K562 (cell line): ENCODE measurements at regions of chr3 and their contacts with region 1.

Region 1: DNA sequence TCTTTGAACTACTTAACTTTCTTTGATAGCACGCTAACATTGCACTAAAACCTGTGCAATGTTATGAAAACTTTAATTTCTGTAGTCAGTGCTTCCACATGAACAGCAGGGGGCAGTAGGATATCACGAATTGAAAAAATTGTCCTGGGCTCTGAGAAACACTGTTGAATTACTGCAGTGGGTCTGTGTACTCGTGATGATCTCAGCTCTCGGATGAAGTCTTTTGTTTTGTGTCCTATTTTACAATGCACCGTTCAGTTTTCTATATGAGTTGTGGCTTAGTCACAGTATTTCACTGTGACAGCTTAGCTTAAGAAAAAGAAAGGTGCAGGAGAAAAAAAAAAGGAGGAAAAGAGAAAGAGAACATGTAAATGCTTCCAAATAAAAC is 141.3 kb upstream of the CCDC54 start:
- DNase-seq: peak; percentile 50 to 69 (median 58)
- ATAC-seq: peak; percentile 81
- H3K4me3 ChIP-seq: peak overlapping the region; percentile 24; the same call in 1 of the 2 replicates
- H3K27ac ChIP-seq: no peak overlapping the region
- H3K4me1 ChIP-seq: peaks cover 0 to 7% of the 10 kb centered on the region in 2 experiments; a peak in 3 of 5 replicates
- H3K27me3 ChIP-seq: no peaks in the 10 kb centered on the region
- CTCF ChIP-seq: peak; percentile 57 to 83 (median 65); a peak in 5 of 6 replicates
- EP300 ChIP-seq: no peak
- POLR2A ChIP-seq: no peak
- RAD21 ChIP-seq: peak; percentile 85

Region 2: DNA sequence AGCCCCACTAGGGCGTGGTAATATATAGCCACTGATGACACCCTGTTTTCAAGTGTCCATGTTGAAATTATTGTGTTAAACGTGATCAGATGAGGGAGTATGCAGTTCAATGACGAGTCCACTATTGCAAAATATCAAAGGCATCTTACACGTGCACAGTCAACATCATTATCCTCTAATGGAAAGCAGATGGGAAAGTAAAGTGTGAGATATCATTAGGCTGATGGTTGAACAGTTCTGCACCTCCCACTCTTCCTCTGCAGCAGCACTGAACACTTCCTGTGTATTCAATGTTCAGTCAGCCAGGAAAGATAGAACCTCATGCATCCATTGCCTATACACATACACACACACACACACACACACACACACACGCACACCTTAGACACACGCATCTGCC is 290.5 kb before region 1 on chr3:
- CTCF ChIA-PET with region 1: no interaction called
- POLR2A ChIA-PET with region 1: no interaction called
- in situ Hi-C with region 1: no loop called
- intact Hi-C with region 1: no loop called
- DNase-seq: no peak
- ATAC-seq: no peak
- H3K4me3 ChIP-seq: no peak overlapping the region
- H3K27ac ChIP-seq: no peak overlapping the region
- H3K4me1 ChIP-seq: no peaks in the 10 kb centered on the region
- H3K27me3 ChIP-seq: no peaks in the 10 kb centered on the region
- CTCF ChIP-seq: no peak
- EP300 ChIP-seq: no peak
- POLR2A ChIP-seq: no peak
- RAD21 ChIP-seq: no peak

Region 3: GRCh38 chr3:107543666-107544065 is 307.7 kb after region 1 on chr3:
- CTCF ChIA-PET with region 1: no interaction called
- POLR2A ChIA-PET with region 1: no interaction called
- in situ Hi-C with region 1: no loop called
- intact Hi-C with region 1: loop called (anchors 10 kb)
- DNase-seq: peak in 1 of 4 experiments; percentile 14
- ATAC-seq: peak; percentile 62; the same call in 2 of the 3 replicates
- H3K4me3 ChIP-seq: no peak overlapping the region
- H3K27ac ChIP-seq: no peak overlapping the region
- H3K4me1 ChIP-seq: no peaks in the 10 kb centered on the region
- H3K27me3 ChIP-seq: no peaks in the 10 kb centered on the region
- CTCF ChIP-seq: peak in 2 of 3 experiments; percentile 21 to 52; a peak in 3 of 6 replicates
- EP300 ChIP-seq: no peak
- POLR2A ChIP-seq: no peak
- RAD21 ChIP-seq: peak; percentile 34 to 44; a peak in 3 of 4 replicates

Region 4: DNA sequence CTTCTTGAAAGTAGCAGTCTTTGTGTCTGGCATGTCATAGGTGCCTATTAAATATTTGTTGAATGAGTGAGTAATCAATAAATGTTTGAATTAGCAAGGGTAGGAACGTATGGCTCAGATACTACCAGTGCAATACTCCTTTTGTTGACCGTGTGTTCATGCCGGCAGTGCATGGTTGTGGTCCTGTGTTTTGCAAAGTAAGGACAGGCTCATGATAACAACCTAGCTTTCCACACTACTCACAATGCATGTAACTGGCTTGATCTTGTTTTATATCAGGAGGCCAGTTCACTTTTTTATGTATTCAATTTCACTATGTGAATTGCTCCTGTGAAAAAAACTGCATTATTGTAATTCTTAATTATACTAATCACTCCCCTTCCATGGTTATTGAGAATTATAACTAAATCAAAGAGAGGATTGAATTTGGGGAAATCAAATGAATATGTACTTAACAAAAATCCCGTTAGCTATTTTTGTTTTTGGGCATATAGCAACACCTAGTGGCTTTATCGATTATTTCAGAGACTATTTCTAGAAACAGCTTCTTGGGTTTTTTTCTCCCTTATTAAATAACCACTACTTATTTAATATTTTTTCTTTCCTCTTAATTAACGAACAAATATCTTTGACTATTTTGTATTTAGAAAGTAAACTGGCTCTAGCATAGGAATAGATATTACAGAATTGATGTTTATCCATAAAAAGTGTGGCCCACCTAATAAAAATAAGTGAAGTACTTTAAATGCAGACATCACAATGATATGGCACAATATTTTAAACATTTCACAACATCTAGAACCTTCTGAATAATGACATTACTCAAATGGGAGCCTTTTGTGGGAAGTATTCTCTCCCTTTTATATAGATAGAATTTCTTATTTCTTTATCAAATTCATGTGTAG is 505.3 kb after region 1 on chr3:
- CTCF ChIA-PET with region 1: no interaction called
- POLR2A ChIA-PET with region 1: no interaction called
- in situ Hi-C with region 1: no loop called
- intact Hi-C with region 1: loop called (anchors 5 kb)
- DNase-seq: peak in 1 of 4 experiments; percentile 3
- ATAC-seq: no peak
- H3K4me3 ChIP-seq: no peak overlapping the region
- H3K27ac ChIP-seq: no peak overlapping the region
- H3K4me1 ChIP-seq: no peaks in the 10 kb centered on the region
- H3K27me3 ChIP-seq: no peaks in the 10 kb centered on the region
- CTCF ChIP-seq: peak in 2 of 3 experiments; percentile 18 to 57; a peak in 3 of 6 replicates
- EP300 ChIP-seq: no peak
- POLR2A ChIP-seq: no peak
- RAD21 ChIP-seq: peak; percentile 52 to 57

Region 5: DNA sequence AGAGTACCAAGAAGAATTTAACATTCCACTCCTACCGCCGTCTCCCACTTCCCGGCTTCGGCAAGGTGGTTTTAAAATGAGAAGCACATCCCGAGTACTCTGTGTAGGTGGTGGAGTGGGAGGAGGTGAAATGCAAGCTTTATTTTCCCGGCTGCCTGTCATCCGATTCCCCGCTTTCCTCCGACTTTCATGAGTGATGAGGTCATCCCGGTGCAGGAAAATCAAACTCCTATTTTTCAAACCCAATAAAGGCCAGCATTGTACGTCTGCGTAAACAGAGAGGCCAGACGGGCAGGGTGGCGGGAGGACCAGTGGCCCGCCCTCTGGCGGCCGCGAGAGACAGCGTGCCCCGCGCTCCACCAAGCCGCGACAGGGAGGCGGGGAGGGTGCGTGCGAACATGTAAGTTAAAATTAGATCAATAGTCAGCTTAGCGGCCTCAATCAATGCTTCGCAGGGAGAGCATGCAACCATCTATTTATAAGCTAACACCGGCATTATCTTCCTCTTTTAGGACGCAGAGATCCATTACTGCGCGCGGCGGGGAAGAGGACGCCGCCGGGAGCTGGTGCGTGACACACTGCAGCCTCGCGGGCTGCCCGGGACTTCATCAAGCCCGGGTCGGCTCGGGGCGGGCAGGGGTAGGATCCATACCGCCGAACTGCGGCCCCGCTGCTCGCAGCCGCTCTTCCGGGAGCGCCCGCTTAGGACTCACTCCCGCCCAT is 691.6 kb after region 1 on chr3:
- CTCF ChIA-PET with region 1: no interaction called
- POLR2A ChIA-PET with region 1: no interaction called
- in situ Hi-C with region 1: no loop called
- intact Hi-C with region 1: loop called (anchors 5 kb)
- DNase-seq: peak; percentile 32 to 60 (median 38)
- ATAC-seq: peak; percentile 99
- H3K4me3 ChIP-seq: no peak overlapping the region
- H3K27ac ChIP-seq: no peak overlapping the region
- H3K4me1 ChIP-seq: peaks cover 0 to 6% of the 10 kb centered on the region in 2 experiments; a peak in 2 of 5 replicates
- H3K27me3 ChIP-seq: peaks cover 0 to 10% of the 10 kb centered on the region in 2 experiments; a peak in 2 of 5 replicates
- CTCF ChIP-seq: peak; percentile 57 to 77 (median 74)
- EP300 ChIP-seq: no peak
- POLR2A ChIP-seq: no peak
- RAD21 ChIP-seq: peak; percentile 45 to 68